Endothelial cell of umbilical vein (primary cell): ENCODE measurements at regions of chr10 and their contacts with region 1.

Region 1: DNA sequence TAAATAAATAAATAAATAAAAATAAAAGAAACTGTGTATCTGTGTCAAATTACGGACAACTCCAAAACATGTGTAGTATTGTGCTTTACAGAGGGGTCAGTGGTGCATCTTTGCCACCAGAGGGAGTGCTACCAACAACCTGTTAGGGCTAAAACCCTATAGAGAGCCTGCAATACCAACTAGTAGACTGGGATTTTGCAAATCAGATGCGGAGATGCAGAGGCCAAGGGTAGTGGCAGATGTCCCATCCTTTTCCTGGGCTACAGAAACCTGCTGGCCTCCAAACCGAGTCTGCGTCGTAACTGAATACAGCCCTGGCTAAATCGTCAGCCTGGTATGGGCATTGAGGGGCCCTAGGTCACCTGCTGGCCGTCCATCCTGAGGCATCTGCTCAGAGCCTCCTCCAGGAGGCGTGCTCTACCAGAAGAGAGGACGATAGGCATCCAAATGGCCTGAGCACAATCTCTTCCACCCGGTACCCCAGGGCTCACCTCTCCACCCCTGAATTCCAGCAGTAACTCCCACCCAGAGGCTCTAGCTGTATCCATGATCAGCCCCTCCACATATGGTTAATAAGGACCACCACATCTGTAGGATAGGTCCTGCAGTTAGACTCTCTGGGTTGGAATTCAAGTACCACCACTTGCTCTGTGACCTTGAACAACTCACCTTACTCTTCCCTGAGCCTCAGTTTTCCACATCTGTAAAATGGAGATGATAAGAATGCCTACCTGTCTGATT is 6.2 kb upstream of the RRP12 start:
- DNase-seq: peak; percentile 86
- H3K4me3 ChIP-seq: peak overlapping the region in 1 of 3 experiments; percentile 31
- H3K27ac ChIP-seq: no peak overlapping the region
- H3K4me1 ChIP-seq: no peaks in the 10 kb centered on the region
- H3K27me3 ChIP-seq: no peaks in the 10 kb centered on the region
- CTCF ChIP-seq: peak; percentile 59 to 76
- POLR2A ChIP-seq: no peak

Region 2: DNA sequence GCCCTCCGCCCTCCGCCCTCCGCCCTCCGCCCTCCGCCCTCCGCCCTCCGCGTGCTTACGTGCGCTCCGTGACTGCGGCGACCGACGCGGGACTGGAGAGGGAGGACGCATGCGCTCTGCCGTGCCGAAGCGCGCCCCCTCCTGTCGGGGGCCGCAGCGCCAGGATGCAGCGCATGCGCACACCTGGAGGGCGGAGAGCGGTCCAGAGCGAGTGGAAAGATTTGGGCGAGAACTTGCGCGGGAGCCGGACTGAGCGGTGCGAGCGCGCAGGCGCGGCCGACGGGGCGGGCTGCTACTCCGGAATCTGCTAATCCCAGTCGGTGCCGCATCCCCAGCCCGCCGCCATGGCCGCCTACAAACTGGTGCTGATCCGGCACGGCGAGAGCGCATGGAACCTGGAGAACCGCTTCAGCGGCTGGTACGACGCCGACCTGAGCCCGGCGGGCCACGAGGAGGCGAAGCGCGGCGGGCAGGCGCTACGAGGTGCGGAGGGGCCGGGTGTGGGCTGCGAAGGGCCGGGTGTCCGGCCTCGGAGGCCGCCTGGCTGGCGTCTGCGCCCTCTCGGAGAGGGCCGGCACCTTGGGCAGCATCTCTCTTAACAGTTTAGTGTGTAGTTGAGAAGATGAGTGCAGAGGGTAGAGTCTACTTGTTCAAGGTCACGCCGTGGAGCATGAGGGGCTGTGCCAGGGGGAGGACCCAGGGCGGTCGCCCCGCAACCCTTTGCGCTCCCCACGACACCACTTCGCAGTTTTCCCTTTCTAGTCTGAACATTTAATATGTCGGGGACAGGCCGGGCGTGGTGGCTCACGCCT is 18.8 kb after region 1 on chr10 and contains the start of gene PGAM1:
- CTCF ChIA-PET with region 1: interaction called, 7 read pairs
- POLR2A ChIA-PET with region 1: no interaction called
- dilution Hi-C with region 1: no loop called
- intact Hi-C with region 1: loop called (anchors 1 kb)
- DNase-seq: peak; percentile 99
- H3K4me3 ChIP-seq: peak within 1 kb of the TSS; percentile 76 to 95 (median 86)
- H3K27ac ChIP-seq: peak within 1 kb of the TSS; percentile 79
- H3K4me1 ChIP-seq: peaks cover 27% of the 10 kb centered on the region
- H3K27me3 ChIP-seq: no peaks in the 10 kb centered on the region
- CTCF ChIP-seq: peak; percentile 66 to 91
- POLR2A ChIP-seq: no peak
- total RNA-seq, gene PGAM1: 357 and 375 TPM in 2 replicates

Region 3: GRCh38 chr10:97434055-97434454 is 26.7 kb after region 1 on chr10:
- CTCF ChIA-PET with region 1: interaction called, 11 read pairs
- POLR2A ChIA-PET with region 1: no interaction called
- dilution Hi-C with region 1: no loop called
- intact Hi-C with region 1: no loop called
- DNase-seq: no peak
- H3K4me3 ChIP-seq: no peak overlapping the region
- H3K27ac ChIP-seq: no peak overlapping the region
- H3K4me1 ChIP-seq: no peaks in the 10 kb centered on the region
- H3K27me3 ChIP-seq: no peaks in the 10 kb centered on the region
- CTCF ChIP-seq: no peak
- POLR2A ChIP-seq: no peak

Region 4: GRCh38 chr10:97445722-97446639 is 38.6 kb after region 1 on chr10 and contains the starts of genes EXOSC1 and ZDHHC16:
- CTCF ChIA-PET with region 1: no interaction called
- POLR2A ChIA-PET with region 1: no interaction called
- dilution Hi-C with region 1: no loop called
- intact Hi-C with region 1: loop called (anchors 1 kb)
- DNase-seq: peak; percentile 96
- H3K4me3 ChIP-seq: peak within 1 kb of the TSS; percentile 41 to 96 (median 87)
- H3K27ac ChIP-seq: peak within 1 kb of the TSS; percentile 61
- H3K4me1 ChIP-seq: peaks cover 18% of the 10 kb centered on the region
- H3K27me3 ChIP-seq: no peaks in the 10 kb centered on the region
- CTCF ChIP-seq: no peak
- POLR2A ChIP-seq: peak; percentile 84
- total RNA-seq, gene EXOSC1: 43.6 and 50.7 TPM in 2 replicates
- total RNA-seq, gene ZDHHC16: 52.0 and 53.2 TPM in 2 replicates

Region 5: DNA sequence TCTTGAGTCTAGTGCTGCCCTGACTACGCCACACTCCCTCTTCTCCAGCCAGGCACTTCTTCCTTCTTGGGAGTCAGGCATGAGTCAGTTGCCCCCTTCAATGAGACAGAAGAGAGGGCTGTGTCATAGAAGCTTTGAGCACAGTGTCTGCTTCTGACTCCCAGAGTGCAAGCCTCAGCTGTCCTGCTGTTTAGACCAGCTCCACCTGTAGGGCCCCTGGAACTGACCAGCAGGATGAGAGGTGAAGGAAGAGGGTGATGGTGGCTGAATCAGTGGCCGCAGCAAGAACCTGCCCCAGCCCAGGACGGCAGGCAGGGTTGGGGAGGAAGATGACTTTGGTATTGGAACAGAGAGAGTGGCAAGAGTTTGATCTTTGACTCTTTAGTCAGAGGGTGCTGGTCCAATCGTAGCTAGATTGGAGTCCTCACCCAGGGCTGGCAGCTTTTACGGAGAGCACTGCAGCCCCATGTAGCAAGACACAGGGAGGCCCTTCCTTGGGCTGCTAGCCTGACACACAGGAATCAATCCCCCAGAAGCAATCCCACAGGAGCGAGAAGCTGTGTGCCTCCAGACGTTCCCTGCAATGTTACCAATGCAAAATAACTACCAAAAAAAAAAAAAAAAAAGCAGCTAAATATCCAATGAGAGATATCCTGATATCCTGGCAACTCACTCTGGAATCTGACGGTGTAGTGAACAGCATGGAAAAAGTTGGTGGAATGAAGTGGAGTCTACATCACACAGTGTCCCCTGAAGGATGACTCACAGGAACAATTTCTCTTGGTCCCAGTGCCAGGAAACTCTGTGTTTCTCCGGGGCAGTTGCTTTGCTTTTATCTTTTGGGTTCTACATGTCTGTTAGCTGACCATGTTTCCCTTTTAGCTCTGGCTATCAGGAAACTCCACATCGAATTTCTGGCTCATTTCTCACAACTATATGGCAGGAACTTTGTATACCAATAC is 189.0 kb after region 1 on chr10:
- CTCF ChIA-PET with region 1: no interaction called
- POLR2A ChIA-PET with region 1: no interaction called
- dilution Hi-C with region 1: no loop called
- intact Hi-C with region 1: loop called (anchors 5 kb)
- DNase-seq: peak; percentile 98
- H3K4me3 ChIP-seq: no peak overlapping the region
- H3K27ac ChIP-seq: peak overlapping the region; percentile 82
- H3K4me1 ChIP-seq: peaks cover 25% of the 10 kb centered on the region
- H3K27me3 ChIP-seq: no peaks in the 10 kb centered on the region
- CTCF ChIP-seq: no peak
- POLR2A ChIP-seq: peak; percentile 66